SK-N-SH (cell line): ENCODE measurements at regions of chr17 and their contacts with region 1.

Region 1: DNA sequence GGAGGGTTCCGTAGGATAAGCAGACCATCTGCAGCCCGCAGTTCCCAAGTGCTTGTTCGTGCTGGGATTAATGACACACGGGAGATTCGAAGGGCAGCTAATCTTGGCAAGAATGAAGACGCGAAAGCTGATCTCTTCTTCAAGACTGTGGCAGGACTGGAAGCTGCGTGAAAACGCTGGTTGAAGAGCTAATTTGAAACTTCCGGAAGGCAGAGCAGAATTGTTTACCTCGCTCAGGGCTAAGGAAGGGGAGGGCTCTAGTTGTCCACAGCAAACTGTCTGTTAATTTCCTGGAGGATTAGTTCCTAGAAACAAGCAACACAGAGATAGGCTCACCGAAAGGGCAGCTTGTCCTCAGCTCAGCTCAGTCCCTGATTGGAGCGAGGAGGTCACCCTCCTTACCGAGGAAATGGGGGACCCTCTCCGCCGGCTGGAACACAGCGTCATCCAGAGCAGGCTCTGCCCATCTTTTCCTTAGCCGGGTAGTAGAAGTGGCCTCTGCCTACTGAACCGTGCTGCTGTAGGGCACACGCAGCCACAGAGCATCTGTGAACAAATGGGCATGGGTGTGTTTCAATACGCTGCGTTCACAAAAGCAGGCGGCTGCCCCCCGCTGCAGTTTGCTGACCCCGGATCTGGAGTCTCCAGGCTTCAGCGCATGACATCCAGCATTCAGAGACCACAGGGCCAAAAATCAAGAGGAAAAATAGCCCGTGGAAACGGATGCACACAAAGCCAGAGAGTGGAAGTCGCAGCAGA is 16.7 kb upstream of the BAIAP2 start:
- DNase-seq: no peak
- H3K4me3 ChIP-seq: no peak overlapping the region
- H3K27ac ChIP-seq: no peak overlapping the region
- H3K4me1 ChIP-seq: peaks cover 0 to 11% of the 10 kb centered on the region in 2 experiments; a peak in 1 of 4 replicates
- H3K27me3 ChIP-seq: peaks cover 10% of the 10 kb centered on the region
- CTCF ChIP-seq: no peak
- EP300 ChIP-seq: no peak
- RAD21 ChIP-seq: no peak

Region 2: DNA sequence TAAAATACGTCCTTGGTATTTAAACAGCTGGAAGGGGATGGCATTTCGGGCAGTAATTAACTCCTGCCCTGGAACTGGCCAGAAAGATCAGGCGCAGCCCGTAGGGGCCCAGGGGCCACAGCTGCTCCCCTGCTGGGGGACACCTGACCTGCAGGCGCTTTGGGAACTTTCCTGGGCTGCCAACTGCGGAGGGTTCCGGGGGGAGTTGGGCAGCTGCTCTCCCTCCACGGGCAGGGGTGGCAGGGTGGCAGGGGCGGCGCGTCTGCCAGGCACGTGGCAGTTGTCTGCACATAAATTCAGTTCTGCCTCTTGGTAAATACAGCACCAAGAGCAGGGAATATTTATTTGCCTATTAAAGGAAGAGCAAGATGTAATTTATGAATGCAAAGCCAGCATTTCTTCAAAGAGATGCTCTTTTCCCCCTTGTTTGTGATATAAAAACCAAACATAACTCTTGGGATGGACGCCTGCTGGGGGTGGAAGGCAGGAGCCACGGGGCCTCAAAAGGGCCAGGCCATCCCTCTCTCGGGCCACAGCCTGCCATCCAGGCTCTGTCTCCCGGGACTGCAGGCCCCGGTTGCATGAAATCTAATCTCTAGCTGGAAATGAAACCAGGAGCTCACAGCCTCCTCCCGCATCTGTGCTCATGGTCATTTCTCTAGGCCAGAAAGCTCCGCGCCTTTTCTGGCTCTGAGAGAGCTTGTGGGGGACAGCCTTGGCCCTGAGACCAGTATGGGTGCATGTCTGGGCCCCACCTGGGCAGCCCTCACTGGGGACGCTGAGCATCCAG is 56.5 kb before region 1 on chr17:
- CTCF ChIA-PET with region 1: no interaction called
- POLR2A ChIA-PET with region 1: no interaction called
- DNase-seq: no peak
- H3K4me3 ChIP-seq: no peak overlapping the region
- H3K27ac ChIP-seq: peak overlapping the region in 1 of 2 experiments; percentile 19; a peak in 1 of 4 replicates
- H3K4me1 ChIP-seq: peaks cover 0 to 37% of the 10 kb centered on the region in 2 experiments; a peak in 2 of 4 replicates
- H3K27me3 ChIP-seq: no peaks in the 10 kb centered on the region
- CTCF ChIP-seq: peak; percentile 12; the same call in 1 of the 2 replicates
- EP300 ChIP-seq: no peak
- RAD21 ChIP-seq: no peak

Region 3: DNA sequence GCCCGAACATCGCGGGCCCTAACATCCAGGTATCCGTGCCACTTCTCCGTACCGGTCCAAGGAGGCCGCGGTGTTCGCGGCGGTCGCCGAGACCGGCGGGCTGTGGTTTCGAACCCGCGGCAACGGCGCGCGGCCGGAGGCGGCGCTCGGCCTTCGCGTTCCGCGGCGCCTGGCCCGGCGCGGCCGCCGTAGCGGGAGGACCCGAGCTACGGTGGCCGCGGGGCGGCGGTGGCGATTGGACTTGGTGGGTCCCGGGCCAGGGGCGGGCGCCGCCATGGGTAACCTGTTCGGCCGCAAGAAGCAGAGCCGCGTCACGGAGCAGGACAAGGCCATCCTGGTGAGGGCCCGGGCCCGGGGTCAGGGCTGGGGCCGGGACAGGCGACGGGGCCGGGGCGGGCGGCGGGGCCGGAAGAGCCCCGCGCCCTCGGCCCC is 26.6 kb before region 1 on chr17 and contains the start of gene CHMP6:
- CTCF ChIA-PET with region 1: interaction called, 11 read pairs
- POLR2A ChIA-PET with region 1: no interaction called
- DNase-seq: peak; percentile 99
- H3K4me3 ChIP-seq: peak within 1 kb of the TSS; percentile 79 to 89
- H3K27ac ChIP-seq: no peak within 1 kb of the TSS; a peak in 1 of 4 replicates
- H3K4me1 ChIP-seq: peaks cover 10 to 17% of the 10 kb centered on the region in 2 experiments; a peak in 1 of 4 replicates
- H3K27me3 ChIP-seq: no peaks in the 10 kb centered on the region
- CTCF ChIP-seq: peak; percentile 32
- EP300 ChIP-seq: no peak; a peak in 1 of 4 replicates
- RAD21 ChIP-seq: no peak
- polyA plus RNA-seq, gene CHMP6: 44.1 and 44.3 TPM in 2 replicates

Region 4: GRCh38 chr17:81002409-81003361 is 15.5 kb before region 1 on chr17:
- CTCF ChIA-PET with region 1: interaction called, 102 read pairs
- POLR2A ChIA-PET with region 1: no interaction called
- DNase-seq: peak; percentile 92
- H3K4me3 ChIP-seq: no peak overlapping the region
- H3K27ac ChIP-seq: no peak overlapping the region
- H3K4me1 ChIP-seq: peaks cover 5 to 14% of the 10 kb centered on the region in 2 experiments; a peak in 1 of 4 replicates
- H3K27me3 ChIP-seq: peaks cover 51% of the 10 kb centered on the region
- CTCF ChIP-seq: no peak
- EP300 ChIP-seq: 0 out of 4 replicates have a peak, but pooled peaks of 1 of the 2 experiments have one; percentile 13
- RAD21 ChIP-seq: no peak

Region 5: DNA sequence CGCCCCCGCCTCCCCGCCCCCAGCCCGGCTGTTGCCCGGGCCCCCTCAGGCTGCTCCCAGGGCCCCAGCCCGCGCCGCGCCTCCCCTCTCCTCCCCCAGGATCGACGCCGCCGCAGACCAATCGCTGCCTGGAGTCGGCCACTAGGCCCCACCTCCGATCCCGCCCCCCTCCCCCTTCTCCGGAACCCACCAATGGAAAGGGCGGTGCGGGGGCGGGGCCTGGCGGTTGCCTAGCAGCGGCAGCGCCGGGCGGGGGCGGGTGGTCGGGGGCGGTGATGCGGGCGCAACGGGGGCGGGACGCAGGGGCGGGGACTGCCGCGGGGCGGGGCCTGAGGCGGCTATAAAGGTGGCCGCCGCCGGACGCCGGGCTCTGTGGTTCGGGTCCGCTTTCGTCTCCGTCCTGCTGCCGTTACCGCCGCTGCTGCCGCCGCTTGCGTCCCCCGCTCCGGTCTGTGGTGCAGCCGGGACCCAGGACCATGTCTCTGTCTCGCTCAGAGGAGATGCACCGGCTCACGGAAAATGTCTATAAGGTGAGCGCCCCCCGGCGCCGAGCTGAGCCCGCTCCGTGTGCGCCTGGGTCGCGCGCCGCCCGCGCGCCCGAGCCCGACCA is 16.7 kb after region 1 on chr17 and contains the start of gene BAIAP2:
- CTCF ChIA-PET with region 1: interaction called, 96 read pairs
- POLR2A ChIA-PET with region 1: interaction called, 3 read pairs
- DNase-seq: peak; percentile 100
- H3K4me3 ChIP-seq: peak within 1 kb of the TSS; percentile 83 to 94
- H3K27ac ChIP-seq: peak within 1 kb of the TSS in 1 of 2 experiments; percentile 75; a peak in 1 of 4 replicates
- H3K4me1 ChIP-seq: peaks cover 4 to 51% of the 10 kb centered on the region in 2 experiments; a peak in 3 of 4 replicates
- H3K27me3 ChIP-seq: no peaks in the 10 kb centered on the region
- CTCF ChIP-seq: peak; percentile 38; the same call in 1 of the 2 replicates
- EP300 ChIP-seq: no peak
- RAD21 ChIP-seq: peak; percentile 21; the same call in 1 of the 2 replicates
- polyA plus RNA-seq, gene BAIAP2: 15.5 and 19.8 TPM in 2 replicates

Region 6: GRCh38 chr17:81064678-81065475 is 46.7 kb after region 1 on chr17:
- CTCF ChIA-PET with region 1: interaction called, 21 read pairs
- POLR2A ChIA-PET with region 1: no interaction called
- DNase-seq: peak; percentile 72
- H3K4me3 ChIP-seq: no peak overlapping the region
- H3K27ac ChIP-seq: peak overlapping the region in 1 of 2 experiments; percentile 64; a peak in 2 of 4 replicates
- H3K4me1 ChIP-seq: peaks cover 0 to 54% of the 10 kb centered on the region in 2 experiments; a peak in 1 of 4 replicates
- H3K27me3 ChIP-seq: no peaks in the 10 kb centered on the region
- CTCF ChIP-seq: no peak
- EP300 ChIP-seq: no peak
- RAD21 ChIP-seq: no peak

Region 7: GRCh38 chr17:81094509-81095382 is 76.5 kb after region 1 on chr17:
- CTCF ChIA-PET with region 1: interaction called, 668 read pairs
- POLR2A ChIA-PET with region 1: no interaction called
- DNase-seq: peak; percentile 84
- H3K4me3 ChIP-seq: 0 out of 4 replicates have a peak overlapping the region, but pooled peaks of 1 of the 2 experiments have one; percentile 5
- H3K27ac ChIP-seq: peak overlapping the region; percentile 40 to 99
- H3K4me1 ChIP-seq: peaks cover 42 to 49% of the 10 kb centered on the region in 2 experiments; a peak in 3 of 4 replicates
- H3K27me3 ChIP-seq: no peaks in the 10 kb centered on the region
- CTCF ChIP-seq: peak; percentile 23; the same call in 1 of the 2 replicates
- EP300 ChIP-seq: peak; percentile 44 to 90; a peak in 2 of 4 replicates
- RAD21 ChIP-seq: no peak

Region 8: DNA sequence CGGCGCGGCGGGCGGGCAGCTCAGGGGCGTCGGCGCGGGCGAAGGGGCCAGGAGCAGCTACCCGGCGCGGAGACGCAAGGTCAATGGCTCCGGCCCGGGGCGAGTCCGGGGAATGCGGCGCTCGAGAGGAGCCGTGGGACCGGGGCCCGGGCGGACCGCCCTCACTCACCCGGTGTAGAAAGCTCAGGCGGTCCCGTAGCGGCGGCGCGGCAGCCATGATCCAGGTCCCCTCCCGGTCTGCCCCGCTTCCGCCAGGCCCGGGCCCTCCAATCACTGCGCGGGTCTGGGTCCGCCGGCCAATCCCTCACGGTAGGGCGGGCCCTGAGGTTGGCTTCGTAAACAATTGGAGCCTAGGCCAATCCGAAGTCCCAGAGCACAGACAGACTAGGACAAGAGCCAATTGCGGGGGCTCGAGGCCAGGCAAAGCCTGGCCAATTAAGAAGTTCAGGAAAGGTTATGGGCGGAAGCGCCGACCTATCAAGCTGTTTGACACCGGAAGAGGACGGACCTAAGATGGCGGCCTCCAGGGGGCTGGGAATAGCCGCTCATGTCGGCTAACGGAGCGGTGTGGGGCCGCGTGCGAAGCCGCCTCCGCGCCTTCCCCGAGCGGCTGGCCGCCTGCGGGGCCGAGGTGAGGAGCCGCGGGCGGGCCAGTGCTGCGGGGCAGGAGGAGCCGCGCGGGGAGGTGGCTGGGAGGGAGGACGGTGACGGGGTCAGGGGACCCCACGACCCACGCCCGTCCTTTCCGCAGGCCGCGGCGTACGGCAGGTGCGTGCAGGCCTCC is 220.8 kb after region 1 on chr17 and contains the starts of genes NDUFAF8 and TEPSIN:
- CTCF ChIA-PET with region 1: interaction called, 14 read pairs
- POLR2A ChIA-PET with region 1: no interaction called
- DNase-seq: peak; percentile 100
- H3K4me3 ChIP-seq: peak within 1 kb of the TSS; percentile 93 to 99
- H3K27ac ChIP-seq: peak within 1 kb of the TSS; percentile 43 to 84; a peak in 3 of 4 replicates
- H3K4me1 ChIP-seq: peaks cover 0 to 40% of the 10 kb centered on the region in 2 experiments; a peak in 2 of 4 replicates
- H3K27me3 ChIP-seq: no peaks in the 10 kb centered on the region
- CTCF ChIP-seq: no peak
- EP300 ChIP-seq: no peak
- RAD21 ChIP-seq: no peak
- polyA plus RNA-seq, gene NDUFAF8: 194 and 229 TPM in 2 replicates
- polyA plus RNA-seq, gene TEPSIN: 35.3 and 36.1 TPM in 2 replicates